ENCODE measurements at regions of chr12 and their contacts with region 1.

Region 1: DNA sequence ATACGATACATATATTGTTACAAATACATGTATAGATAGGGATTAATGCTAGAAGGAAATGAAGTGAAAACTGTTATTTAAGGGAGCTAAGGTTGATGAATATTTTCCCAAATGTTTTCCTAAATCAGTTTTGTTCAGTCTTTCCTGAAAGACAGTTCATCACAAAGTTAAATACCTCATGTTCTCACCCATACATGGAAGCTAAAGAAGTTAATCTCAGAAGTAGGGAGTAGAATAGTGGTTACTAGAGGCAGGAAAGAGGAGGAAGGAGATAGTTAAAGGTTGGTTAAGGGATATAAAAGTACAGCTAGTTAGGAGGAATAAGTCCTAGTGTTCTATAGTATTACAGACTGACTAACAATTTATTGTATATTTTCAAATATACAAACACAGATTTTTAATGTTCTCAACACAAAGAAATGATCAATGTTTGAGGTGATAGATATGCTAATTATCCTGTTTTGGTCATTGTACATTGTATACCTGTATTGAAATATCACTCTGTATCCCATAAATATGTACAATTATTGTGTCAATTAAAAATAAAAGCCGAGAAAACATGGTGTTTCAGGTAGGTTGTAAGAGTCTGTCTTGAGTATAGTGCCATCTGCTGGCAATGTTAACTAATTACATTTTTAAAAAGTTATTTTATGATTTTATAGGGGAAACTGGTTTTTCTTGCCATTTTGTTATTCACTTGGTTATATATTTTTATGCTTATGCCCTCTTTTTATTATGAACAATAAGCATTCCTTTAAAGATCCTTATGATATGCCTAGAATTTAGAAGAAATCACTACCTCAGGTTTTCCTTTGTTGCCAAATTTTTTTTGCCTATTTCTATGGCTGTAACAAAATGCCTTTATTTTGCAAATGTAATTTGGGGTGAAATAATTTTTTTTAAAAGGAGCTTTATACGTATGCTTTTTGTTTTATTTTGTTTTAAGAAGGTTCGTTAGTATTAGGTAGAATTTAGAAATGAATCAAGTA is 26.9 kb downstream of the ZDHHC17 start:
- DNase-seq: no peak
- ATAC-seq: no peak
- H3K4me3 Mint-ChIP-seq: no peak overlapping the region
- H3K27ac Mint-ChIP-seq: no peak overlapping the region
- H3K4me1 Mint-ChIP-seq: peaks cover 2% of the 10 kb centered on the region
- H3K27me3 Mint-ChIP-seq: no peaks in the 10 kb centered on the region

Region 2: GRCh38 chr12:76621582-76622024 is 169.3 kb before region 1 on chr12:
- CTCF ChIA-PET with region 1: interaction called, 31 read pairs
- POLR2A ChIA-PET with region 1: no interaction called
- DNase-seq: peak; percentile 74
- ATAC-seq: peak; percentile 64
- H3K4me3 Mint-ChIP-seq: no peak overlapping the region
- H3K27ac Mint-ChIP-seq: no peak overlapping the region
- H3K4me1 Mint-ChIP-seq: peaks cover 2% of the 10 kb centered on the region
- H3K27me3 Mint-ChIP-seq: no peaks in the 10 kb centered on the region

Region 3: DNA sequence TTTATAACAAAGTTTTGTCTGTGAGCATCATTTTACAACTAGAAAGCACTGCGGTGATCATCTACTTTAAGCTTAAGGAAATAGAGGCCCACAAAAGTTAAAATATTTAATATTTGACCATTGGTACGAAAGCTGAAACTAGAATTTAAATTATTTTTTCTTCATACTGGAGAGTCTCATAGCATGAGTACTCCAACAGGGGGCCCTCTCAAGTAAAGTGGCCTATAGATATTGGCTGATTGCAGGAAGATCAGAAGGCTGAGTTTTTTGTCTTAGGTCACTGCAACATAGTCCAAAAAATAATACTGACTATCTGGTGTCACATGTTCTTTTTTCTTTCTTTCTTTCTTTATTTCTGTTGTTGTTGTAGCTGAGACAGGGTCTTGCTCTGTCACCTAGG is 102.2 kb before region 1 on chr12:
- CTCF ChIA-PET with region 1: interaction called, 11 read pairs
- POLR2A ChIA-PET with region 1: no interaction called
- DNase-seq: no peak
- ATAC-seq: no peak
- H3K4me3 Mint-ChIP-seq: no peak overlapping the region
- H3K27ac Mint-ChIP-seq: no peak overlapping the region
- H3K4me1 Mint-ChIP-seq: no peaks in the 10 kb centered on the region
- H3K27me3 Mint-ChIP-seq: peaks cover 3% of the 10 kb centered on the region

Region 4: GRCh38 chr12:76763743-76764675 is 26.8 kb before region 1 on chr12 and contains the start of gene ZDHHC17:
- CTCF ChIA-PET with region 1: interaction called, 11 read pairs
- POLR2A ChIA-PET with region 1: no interaction called
- DNase-seq: peak; percentile 93
- ATAC-seq: peak; percentile 93
- H3K4me3 Mint-ChIP-seq: peak within 1 kb of the TSS; percentile 99
- H3K27ac Mint-ChIP-seq: peak within 1 kb of the TSS; percentile 98
- H3K4me1 Mint-ChIP-seq: peaks cover 27% of the 10 kb centered on the region
- H3K27me3 Mint-ChIP-seq: peaks cover 2% of the 10 kb centered on the region
- total RNA-seq, gene ZDHHC17: 26.6 to 28.1 TPM

Measured in activated CD8-positive, alpha-beta T cell treated with anti-CD3 and anti-CD28 coated beads, Interleukin-2, amount 10 ng/mL, durations not matched to agents 7 days and 5 days (primary cell).